ENCODE measurements at regions of chr6 and their contacts with region 1.

Region 1: DNA sequence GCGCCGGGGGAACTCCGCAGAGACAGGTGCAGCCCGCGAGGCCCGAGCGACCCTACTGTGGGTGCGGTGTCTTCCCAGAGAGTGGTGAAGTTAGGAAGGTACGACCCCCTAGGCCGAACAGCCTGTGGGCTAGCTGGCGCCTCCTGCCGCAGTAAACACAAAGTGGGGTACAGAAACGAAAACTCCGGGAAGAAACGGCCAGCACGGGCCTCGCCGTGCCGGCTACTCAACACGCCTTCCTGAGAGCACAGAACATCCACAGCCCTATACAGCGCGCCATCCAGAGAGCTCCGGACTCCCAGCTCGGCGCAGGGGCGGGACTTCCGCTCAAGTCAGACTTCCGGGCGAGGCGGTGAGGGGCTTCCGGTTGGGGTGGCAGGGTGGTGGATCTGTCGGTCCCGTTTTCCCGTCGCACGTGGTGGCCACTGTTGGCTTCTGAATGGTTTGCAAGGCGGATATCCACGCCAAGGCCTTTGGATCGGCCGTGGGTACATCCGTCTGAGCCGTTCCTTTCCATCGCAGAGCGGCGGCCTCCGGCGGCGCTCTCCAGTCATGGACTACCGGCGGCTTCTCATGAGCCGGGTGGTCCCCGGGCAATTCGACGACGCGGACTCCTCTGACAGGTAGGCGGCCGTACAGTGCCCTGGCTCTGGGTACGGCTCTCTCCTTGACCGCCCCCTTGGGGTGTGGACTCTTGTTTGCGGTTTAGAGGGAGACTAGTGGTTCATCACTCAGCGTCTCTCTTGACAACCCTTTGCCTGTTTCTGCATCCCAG is at the starts of genes CAGE1 and RIOK1:
- DNase-seq: peak; percentile 97 to 98 (median 97)
- ATAC-seq: peak; percentile 100
- H3K4me3 ChIP-seq: peak within 1 kb of the TSS; percentile 53
- H3K27ac ChIP-seq: peak within 1 kb of the TSS; percentile 48
- H3K4me1 ChIP-seq: no peaks in the 10 kb centered on the region
- H3K27me3 ChIP-seq: no peaks in the 10 kb centered on the region
- total RNA-seq, gene CAGE1: 0.11 to 0.17 (median 0.11) TPM in 3 of 4 donors, not detected in the other
- total RNA-seq, gene RIOK1: 10.6 to 14.3 (median 13.3) TPM

Region 2: DNA sequence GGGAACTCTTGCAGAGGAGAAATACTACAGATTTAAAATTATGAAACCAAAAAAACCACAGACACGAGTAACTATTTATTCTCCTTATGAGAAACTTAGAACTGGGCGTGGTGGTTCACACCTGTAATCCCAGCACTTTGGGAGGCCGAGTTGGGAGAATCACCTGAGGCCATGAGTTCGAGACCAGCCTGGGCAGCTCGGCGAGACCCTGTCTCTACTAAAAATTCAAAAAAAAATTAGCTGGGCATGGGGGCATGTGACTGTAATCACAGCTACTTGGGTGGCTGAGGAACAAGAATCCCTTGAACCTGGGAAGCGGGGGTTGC is 113.5 kb before region 1 on chr6:
- intact Hi-C with region 1: loop called in 1 of 4 experiments (anchors 5 kb)
- DNase-seq: no peak
- ATAC-seq: no peak
- H3K4me3 ChIP-seq: no peak overlapping the region
- H3K27ac ChIP-seq: no peak overlapping the region
- H3K4me1 ChIP-seq: peaks cover 3% of the 10 kb centered on the region
- H3K27me3 ChIP-seq: no peaks in the 10 kb centered on the region

Region 3: DNA sequence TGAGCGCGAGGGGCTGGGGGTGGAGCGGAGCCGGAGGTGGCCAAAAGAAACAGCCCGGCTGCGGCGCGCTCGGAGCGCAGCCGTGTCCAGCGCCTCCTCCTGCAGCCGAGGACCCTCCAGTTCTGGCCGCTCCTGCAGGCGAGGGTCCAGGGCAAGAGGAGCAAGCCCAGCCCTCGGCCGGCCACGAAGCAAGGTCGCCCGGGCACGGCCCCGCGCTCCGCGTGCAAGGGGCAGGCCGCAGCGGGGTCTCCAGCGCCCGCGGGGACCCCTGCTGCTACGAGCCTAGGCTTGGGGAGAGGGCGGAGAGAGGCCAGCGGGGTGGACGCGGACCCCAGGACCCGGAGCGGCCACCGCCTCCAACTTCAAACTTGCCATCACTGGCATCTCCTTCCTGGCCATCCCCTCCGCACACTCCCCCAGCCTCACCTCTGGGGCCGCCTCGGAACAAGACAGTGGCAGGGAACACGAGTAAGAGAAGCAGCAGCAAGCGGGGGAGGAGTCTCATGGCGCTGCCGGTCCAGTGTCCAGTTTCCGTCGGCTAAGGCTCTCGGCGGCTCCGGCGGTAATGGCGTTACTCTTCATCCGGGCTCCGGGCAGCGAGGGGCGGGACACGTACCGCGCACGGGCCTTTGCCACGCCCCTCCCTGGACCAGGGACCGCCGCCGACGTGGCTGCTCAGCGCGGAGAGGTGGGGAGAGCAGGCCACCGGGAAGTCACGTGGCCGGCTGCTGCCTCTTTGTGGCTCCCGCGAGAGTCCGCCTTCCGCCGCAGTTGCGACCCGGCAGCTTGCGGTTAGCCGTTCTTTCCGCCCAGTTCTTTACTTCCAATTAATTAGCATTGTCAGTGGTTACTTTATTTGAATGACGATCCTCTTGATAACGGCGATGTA is 76.8 kb before region 1 on chr6 and contains the start of gene SSR1:
- intact Hi-C with region 1: loop called in 2 of 4 experiments (anchors 5 to 10 kb)
- DNase-seq: peak; percentile 98 to 99 (median 99)
- ATAC-seq: peak; percentile 100
- H3K4me3 ChIP-seq: peak within 1 kb of the TSS; percentile 77
- H3K27ac ChIP-seq: peak within 1 kb of the TSS; percentile 97
- H3K4me1 ChIP-seq: no peaks in the 10 kb centered on the region
- H3K27me3 ChIP-seq: no peaks in the 10 kb centered on the region
- total RNA-seq, gene SSR1: 71.6 to 96.3 (median 82.0) TPM

Region 4: GRCh38 chr6:7461416-7461815 is 71.8 kb after region 1 on chr6:
- intact Hi-C with region 1: no loop called
- DNase-seq: no peak
- ATAC-seq: no peak
- H3K4me3 ChIP-seq: no peak overlapping the region
- H3K27ac ChIP-seq: no peak overlapping the region
- H3K4me1 ChIP-seq: no peaks in the 10 kb centered on the region
- H3K27me3 ChIP-seq: no peaks in the 10 kb centered on the region